ENCODE measurements at regions of chr1 and their contacts with region 1.

Region 1: GRCh38 chr1:16078925-16079656 is 5.6 kb upstream of the FAM131C start:
- DNase-seq: no peak
- H3K4me3 ChIP-seq: no peak overlapping the region
- H3K27me3 ChIP-seq: no peaks in the 10 kb centered on the region
- CTCF ChIP-seq: peak; percentile 95

Region 2: GRCh38 chr1:16055613-16056520 is 23.2 kb before region 1 on chr1:
- CTCF ChIA-PET with region 1: interaction called, 11 read pairs
- POLR2A ChIA-PET with region 1: no interaction called
- DNase-seq: no peak
- H3K4me3 ChIP-seq: no peak overlapping the region
- H3K27me3 ChIP-seq: no peaks in the 10 kb centered on the region
- CTCF ChIP-seq: peak; percentile 96

Region 3: GRCh38 chr1:16091296-16091695 is 12.2 kb after region 1 on chr1:
- CTCF ChIA-PET with region 1: interaction called, 26 read pairs
- POLR2A ChIA-PET with region 1: no interaction called
- DNase-seq: no peak
- H3K4me3 ChIP-seq: no peak overlapping the region
- H3K27me3 ChIP-seq: peaks cover 1% of the 10 kb centered on the region
- CTCF ChIP-seq: no peak

Region 4: GRCh38 chr1:16122916-16123315 is 43.8 kb after region 1 on chr1:
- CTCF ChIA-PET with region 1: interaction called, 13 read pairs
- POLR2A ChIA-PET with region 1: no interaction called
- DNase-seq: peak; percentile 41
- H3K4me3 ChIP-seq: no peak overlapping the region
- H3K27me3 ChIP-seq: no peaks in the 10 kb centered on the region
- CTCF ChIP-seq: no peak

Region 5: GRCh38 chr1:16155532-16156410 is 76.7 kb after region 1 on chr1 and contains the start of gene EPHA2:
- CTCF ChIA-PET with region 1: interaction called, 179 read pairs
- POLR2A ChIA-PET with region 1: no interaction called
- DNase-seq: no peak
- H3K4me3 ChIP-seq: peak within 1 kb of the TSS; percentile 80
- H3K27me3 ChIP-seq: no peaks in the 10 kb centered on the region
- CTCF ChIP-seq: no peak
- polyA plus RNA-seq, gene EPHA2: 13.6 and 26.5 TPM in 2 replicates

Region 6: DNA sequence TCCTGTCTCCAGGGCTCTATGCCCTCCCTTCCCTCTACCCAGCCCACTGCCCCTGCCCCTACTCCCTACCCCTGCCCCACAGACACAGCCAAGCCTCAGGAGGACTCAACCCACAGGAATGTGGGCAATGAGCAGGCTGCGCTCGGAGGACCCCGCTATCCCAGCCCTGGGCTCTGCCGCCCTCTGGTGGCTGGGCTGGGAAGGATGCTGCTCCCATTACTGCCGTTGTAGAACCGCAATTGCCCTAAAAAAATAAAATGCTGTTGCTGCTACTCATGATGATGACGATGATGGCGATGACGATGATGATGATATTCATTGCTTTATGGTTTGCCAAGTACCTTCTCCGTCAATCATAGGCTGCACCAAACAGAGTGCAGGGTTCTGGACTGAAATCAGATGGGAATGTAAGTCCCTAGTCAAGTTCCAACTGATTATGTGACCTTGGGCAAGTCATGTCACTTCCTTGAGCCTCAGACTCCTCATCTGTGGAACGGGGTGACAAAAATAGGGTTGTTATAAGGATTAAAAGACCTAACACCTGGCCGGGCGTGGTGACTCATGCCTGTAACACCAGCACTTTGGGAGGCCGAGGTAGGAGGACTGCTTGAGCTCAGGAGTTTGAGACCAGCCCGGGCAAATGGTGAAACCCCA is 108.8 kb after region 1 on chr1:
- CTCF ChIA-PET with region 1: interaction called, 584 read pairs
- POLR2A ChIA-PET with region 1: no interaction called
- DNase-seq: no peak
- H3K4me3 ChIP-seq: no peak overlapping the region
- H3K27me3 ChIP-seq: no peaks in the 10 kb centered on the region
- CTCF ChIP-seq: peak; percentile 97

Region 7: DNA sequence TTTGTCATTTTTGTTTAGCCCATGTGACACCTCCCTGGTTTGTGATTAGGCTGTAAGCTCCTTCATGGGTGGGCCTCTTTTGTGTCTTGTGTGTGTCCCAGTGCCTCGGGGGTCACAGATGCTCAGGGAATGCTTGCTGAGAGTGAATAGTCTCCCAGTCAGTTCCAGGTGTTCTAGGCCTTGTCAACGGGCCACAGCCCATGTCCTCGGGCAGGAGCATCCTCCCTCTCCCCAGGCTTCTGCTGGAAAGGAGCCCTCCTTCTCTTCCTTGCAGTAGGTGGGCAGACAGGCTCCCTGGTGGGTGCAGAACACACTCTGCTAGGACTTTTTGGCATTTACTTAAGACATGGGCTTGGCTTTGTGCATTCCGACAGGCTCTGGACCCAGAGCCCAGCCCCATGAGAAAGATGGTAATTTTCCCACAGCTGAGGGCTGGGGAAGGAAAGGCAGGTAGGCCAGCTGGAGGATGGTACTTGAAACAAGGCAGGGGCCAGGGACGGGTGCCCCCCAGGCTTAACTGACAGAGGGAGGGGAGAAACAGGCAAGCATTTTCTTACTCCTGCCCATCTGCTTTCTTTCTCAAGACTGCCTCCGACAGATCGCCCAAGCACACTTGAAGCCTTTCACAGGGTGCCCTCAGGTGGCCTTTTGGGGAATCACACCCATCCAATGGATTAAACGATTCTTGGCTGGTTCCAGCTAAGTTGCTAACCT is 165.0 kb after region 1 on chr1:
- CTCF ChIA-PET with region 1: interaction called, 40 read pairs
- POLR2A ChIA-PET with region 1: no interaction called
- DNase-seq: no peak
- H3K4me3 ChIP-seq: no peak overlapping the region
- H3K27me3 ChIP-seq: no peaks in the 10 kb centered on the region
- CTCF ChIP-seq: peak; percentile 89

Measured in BJ (cell line).